ENCODE measurements at regions of chr5 and their contacts with region 1.

Region 1: DNA sequence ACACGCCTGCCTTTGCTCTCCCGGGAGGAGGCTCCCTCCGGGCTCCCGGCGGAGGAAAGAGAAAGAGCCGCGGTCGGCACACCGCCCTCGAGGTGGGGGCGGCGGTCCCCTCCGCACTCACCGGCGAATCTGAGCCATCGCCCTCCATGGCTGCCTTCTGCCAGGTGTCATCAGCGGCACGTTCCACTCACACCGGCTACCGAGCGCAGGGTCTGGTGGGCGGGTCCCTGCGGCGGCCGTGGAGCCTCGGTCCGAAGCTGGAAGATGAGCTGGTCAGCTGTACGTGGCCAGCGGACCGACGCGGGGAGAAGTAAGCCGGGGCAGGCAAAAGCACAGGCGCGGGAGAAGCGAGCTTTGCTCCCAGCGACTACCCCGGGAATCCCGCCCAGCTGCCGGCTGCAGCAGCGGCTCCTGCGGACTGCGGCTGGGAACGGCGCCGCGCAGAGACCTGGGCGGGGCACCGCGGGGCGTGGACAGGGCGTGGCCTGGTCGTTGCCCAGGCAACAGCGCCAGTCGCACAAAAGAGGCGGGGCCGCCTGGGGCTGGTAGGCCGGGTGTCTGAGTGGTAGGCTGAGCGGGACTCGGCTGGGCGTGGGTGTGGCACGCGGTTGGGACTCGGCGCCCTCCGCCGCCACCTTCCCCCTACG is at the start of gene TRIM36:
- DNase-seq: peak; percentile 94
- H3K4me3 Mint-ChIP-seq: peak within 1 kb of the TSS; percentile 79
- H3K27ac Mint-ChIP-seq: peak within 1 kb of the TSS; percentile 26
- H3K4me1 Mint-ChIP-seq: peaks cover 6% of the 10 kb centered on the region
- H3K27me3 Mint-ChIP-seq: peaks cover 58% of the 10 kb centered on the region
- total RNA-seq, gene TRIM36: not detected

Region 2: DNA sequence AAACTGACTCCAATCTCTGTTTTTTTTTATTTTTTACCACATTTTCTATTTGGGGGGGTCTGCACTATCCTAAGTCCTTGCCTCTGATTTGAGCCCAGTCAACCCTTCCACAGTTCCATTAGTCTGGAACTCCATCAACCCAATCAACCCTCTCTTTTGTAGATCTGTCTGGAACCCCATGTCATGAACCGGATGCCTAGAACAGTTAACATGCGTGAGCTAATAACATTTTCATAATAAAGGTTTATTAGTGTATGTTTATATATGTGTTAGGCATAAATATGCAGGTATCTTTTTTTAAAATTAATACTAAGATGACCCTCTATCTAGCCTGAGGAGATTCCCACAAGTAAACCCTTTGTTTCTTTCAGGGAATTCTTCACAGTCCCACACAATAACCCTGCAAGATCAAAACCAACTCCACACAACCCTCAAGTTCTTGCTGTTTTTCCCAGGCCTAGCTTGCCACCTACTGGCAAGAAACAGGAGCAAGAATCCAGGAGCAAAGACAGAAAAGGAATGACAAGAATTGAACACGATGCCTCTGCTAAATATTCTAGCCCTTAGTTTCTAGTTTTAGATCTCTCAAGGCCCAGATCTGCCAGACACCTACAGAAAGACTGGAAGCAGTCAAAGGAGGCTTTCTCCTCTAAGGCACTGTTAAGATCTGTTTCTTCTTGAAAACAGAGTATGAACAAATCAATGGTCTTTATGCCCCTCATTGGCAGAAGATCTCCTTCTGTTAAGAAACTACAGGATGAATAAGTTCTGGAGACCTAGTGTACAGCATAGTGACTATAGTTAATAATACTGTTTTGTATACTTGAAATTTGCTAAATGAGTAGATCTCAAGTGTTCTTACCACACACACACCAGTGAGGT is 100.3 kb before region 1 on chr5:
- CTCF ChIA-PET with region 1: interaction called, 4 read pairs
- POLR2A ChIA-PET with region 1: no interaction called
- intact Hi-C with region 1: loop called (anchors 2 kb)
- DNase-seq: peak; percentile 20
- H3K4me3 Mint-ChIP-seq: no peak overlapping the region
- H3K27ac Mint-ChIP-seq: peak overlapping the region; percentile 57
- H3K4me1 Mint-ChIP-seq: peaks cover 19% of the 10 kb centered on the region
- H3K27me3 Mint-ChIP-seq: peaks cover 12% of the 10 kb centered on the region

Region 3: GRCh38 chr5:115186794-115187193 is 17.2 kb after region 1 on chr5:
- CTCF ChIA-PET with region 1: no interaction called
- POLR2A ChIA-PET with region 1: no interaction called
- intact Hi-C with region 1: no loop called
- DNase-seq: no peak
- H3K4me3 Mint-ChIP-seq: no peak overlapping the region
- H3K27ac Mint-ChIP-seq: no peak overlapping the region
- H3K4me1 Mint-ChIP-seq: peaks cover 3% of the 10 kb centered on the region
- H3K27me3 Mint-ChIP-seq: peaks cover 26% of the 10 kb centered on the region

Region 4: DNA sequence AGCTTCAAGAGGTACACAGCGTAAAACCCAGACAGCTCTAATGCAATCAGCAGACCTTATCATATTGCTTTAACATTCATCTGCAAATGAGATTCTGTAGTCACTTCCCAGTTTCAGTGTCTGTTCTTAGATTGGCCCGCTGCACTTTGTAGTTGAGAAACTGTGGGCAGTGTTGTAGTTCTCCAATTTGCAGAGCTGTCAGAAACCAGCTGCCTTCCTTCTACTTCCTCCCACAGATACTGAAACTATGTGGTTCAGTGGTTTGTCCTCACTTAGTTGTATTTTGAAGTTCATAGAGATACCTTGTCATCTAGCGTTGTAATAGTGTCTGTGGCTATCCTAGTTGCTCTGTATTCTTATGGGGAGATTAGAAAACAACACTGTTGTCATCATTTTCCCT is 39.7 kb after region 1 on chr5:
- CTCF ChIA-PET with region 1: no interaction called
- POLR2A ChIA-PET with region 1: no interaction called
- intact Hi-C with region 1: loop called (anchors 1 kb)
- DNase-seq: peak; percentile 66
- H3K4me3 Mint-ChIP-seq: no peak overlapping the region
- H3K27ac Mint-ChIP-seq: no peak overlapping the region
- H3K4me1 Mint-ChIP-seq: peaks cover 9% of the 10 kb centered on the region
- H3K27me3 Mint-ChIP-seq: no peaks in the 10 kb centered on the region

Region 5: GRCh38 chr5:115262321-115263077 is 92.9 kb after region 1 on chr5 and contains the start of gene PGGT1B:
- CTCF ChIA-PET with region 1: interaction called, 3 read pairs
- POLR2A ChIA-PET with region 1: no interaction called
- intact Hi-C with region 1: loop called (anchors 1 kb)
- DNase-seq: peak; percentile 85
- H3K4me3 Mint-ChIP-seq: peak within 1 kb of the TSS; percentile 92
- H3K27ac Mint-ChIP-seq: peak within 1 kb of the TSS; percentile 80
- H3K4me1 Mint-ChIP-seq: peaks cover 47% of the 10 kb centered on the region
- H3K27me3 Mint-ChIP-seq: no peaks in the 10 kb centered on the region
- total RNA-seq, gene PGGT1B: 38.7 TPM

Region 6: DNA sequence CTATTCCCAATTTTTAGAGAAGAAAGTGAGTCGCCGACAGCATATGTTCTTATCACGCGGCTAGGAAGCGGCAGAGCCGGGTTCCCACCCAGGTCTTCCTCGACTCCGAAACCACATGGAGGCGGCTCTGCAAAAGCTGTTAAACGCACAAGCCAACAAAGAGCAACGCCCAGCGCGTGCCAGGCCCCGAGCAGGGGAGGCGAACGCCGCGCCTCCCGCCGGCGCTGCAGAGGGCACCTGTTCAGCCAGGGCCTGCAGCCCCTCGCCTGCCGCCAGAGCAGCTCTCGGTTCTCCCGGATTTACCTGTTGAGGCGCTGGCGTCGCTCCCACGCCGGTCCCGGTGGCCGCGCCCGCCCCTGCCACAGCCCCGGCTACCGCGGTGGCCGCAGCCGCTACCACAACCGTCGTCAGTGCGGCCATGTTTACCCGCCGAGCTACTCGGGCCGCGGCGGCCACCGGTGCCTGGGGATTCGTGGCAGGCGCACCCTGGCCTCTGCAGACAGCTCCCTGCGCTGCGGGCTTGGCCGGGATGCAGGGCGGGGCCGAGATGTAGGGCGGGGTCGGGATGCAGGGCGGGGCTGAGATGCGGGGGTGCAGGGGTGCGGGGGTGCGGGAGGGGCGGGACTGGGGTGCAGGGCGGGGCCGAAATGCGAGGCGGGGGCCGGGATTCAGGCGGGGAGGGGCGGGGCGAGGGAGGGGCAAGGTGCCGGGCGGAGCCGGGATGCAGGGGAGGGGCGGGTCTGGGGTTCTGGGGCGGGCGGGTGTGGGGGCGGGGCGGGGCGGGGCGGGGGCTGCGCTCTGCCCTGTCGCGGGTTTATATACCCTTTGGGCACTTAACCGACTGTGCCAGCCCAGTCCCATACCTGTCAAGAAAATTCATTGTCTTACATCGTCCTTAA is 126.8 kb after region 1 on chr5 and contains the start of gene CCDC112:
- CTCF ChIA-PET with region 1: no interaction called
- POLR2A ChIA-PET with region 1: no interaction called
- intact Hi-C with region 1: loop called (anchors 1 kb)
- DNase-seq: peak; percentile 87
- H3K4me3 Mint-ChIP-seq: peak within 1 kb of the TSS; percentile 76
- H3K27ac Mint-ChIP-seq: no peak within 1 kb of the TSS
- H3K4me1 Mint-ChIP-seq: peaks cover 7% of the 10 kb centered on the region
- H3K27me3 Mint-ChIP-seq: peaks cover 8% of the 10 kb centered on the region
- total RNA-seq, gene CCDC112: 1.7 to 1.8 TPM

Region 7: GRCh38 chr5:115625579-115626444 is 456.2 kb after region 1 on chr5 and contains the start of gene TMED7:
- CTCF ChIA-PET with region 1: no interaction called
- POLR2A ChIA-PET with region 1: no interaction called
- intact Hi-C with region 1: loop called (anchors 5 kb)
- DNase-seq: peak; percentile 100
- H3K4me3 Mint-ChIP-seq: no peak within 1 kb of the TSS
- H3K27ac Mint-ChIP-seq: peak within 1 kb of the TSS; percentile 92
- H3K4me1 Mint-ChIP-seq: peaks cover 23% of the 10 kb centered on the region
- H3K27me3 Mint-ChIP-seq: no peaks in the 10 kb centered on the region
- total RNA-seq, gene TMED7: 42.2 to 44.1 TPM

Measured in activated CD4-positive, alpha-beta memory T cell treated with anti-CD3 and anti-CD28 coated beads for 36 hours (primary cell).